ENCODE measurements at regions of chr3 and their contacts with region 1.

Region 1: GRCh38 chr3:52986938-52987337 is 58.9 kb downstream of the SFMBT1 start:
- DNase-seq: no peak
- ATAC-seq: no peak
- H3K4me3 ChIP-seq: no peak overlapping the region
- H3K27ac ChIP-seq: no peak overlapping the region
- H3K4me1 ChIP-seq: peaks cover 4% of the 10 kb centered on the region
- H3K27me3 ChIP-seq: no peaks in the 10 kb centered on the region
- CTCF ChIP-seq: peak; percentile 47

Region 2: GRCh38 chr3:53003320-53003719 is 16.4 kb after region 1 on chr3:
- CTCF ChIA-PET with region 1: interaction called, 3 read pairs
- POLR2A ChIA-PET with region 1: interaction called, 17 read pairs
- in situ Hi-C with region 1: no loop called
- intact Hi-C with region 1: no loop called
- DNase-seq: no peak
- ATAC-seq: no peak
- H3K4me3 ChIP-seq: no peak overlapping the region
- H3K27ac ChIP-seq: no peak overlapping the region
- H3K4me1 ChIP-seq: no peaks in the 10 kb centered on the region
- H3K27me3 ChIP-seq: no peaks in the 10 kb centered on the region
- CTCF ChIP-seq: no peak

Region 3: DNA sequence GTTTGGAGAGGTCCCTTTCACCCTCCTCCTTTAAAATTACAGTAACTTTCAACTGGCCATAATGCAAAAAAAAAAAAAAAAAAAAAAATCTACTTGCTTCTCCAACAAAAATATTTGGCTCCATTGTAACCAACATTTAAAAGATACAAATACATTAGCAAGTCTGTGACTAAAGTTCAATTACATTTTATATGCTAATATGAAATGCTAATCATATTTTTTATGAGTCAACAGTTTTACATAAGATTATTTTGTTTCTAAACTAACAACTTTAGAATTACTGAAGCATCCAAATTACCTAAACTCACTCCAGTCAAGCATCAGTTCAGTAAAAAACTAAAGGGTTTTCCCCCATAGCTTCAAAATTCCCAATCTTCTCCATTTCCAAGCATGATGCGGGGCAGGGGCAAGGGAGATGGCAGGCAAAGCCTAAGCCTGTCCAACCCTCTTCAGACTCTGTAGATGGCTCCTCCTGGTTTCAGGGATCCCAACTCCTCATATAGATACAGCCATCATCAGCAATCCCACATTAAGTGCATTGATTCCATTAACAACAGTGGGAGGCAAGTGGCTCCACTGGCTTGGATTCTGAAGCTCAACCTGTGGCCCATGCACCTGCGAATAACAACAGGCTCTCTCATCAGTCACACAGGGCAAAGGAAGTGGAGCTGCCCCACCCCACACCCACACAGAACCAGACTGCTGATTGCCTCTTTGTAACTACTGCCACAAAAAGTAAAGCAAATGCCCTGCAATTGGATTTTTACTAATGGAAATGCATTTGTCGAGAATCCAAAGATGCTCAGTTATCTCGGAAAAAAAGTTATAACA is 43.9 kb after region 1 on chr3:
- CTCF ChIA-PET with region 1: no interaction called
- POLR2A ChIA-PET with region 1: no interaction called
- in situ Hi-C with region 1: no loop called
- intact Hi-C with region 1: no loop called
- DNase-seq: no peak
- ATAC-seq: no peak
- H3K4me3 ChIP-seq: no peak overlapping the region
- H3K27ac ChIP-seq: no peak overlapping the region
- H3K4me1 ChIP-seq: peaks cover 15% of the 10 kb centered on the region
- H3K27me3 ChIP-seq: no peaks in the 10 kb centered on the region
- CTCF ChIP-seq: no peak